Sciatic nerve (tissue), 2 donors: ENCODE measurements at regions of chr14 and their contacts with region 1.

Region 1: GRCh38 chr14:26794731-26795130 is 196.9 kb upstream of the NOVA1 start:
- DNase-seq: no peak
- ATAC-seq: no peak

Region 2: GRCh38 chr14:26828741-26829140 is 34.0 kb after region 1 on chr14:
- intact Hi-C with region 1: loop called (anchors 2 kb)
- DNase-seq: no peak
- ATAC-seq: no peak